Natural killer cell (primary cell): ENCODE measurements at regions of chr6 and their contacts with region 1.

Region 1: DNA sequence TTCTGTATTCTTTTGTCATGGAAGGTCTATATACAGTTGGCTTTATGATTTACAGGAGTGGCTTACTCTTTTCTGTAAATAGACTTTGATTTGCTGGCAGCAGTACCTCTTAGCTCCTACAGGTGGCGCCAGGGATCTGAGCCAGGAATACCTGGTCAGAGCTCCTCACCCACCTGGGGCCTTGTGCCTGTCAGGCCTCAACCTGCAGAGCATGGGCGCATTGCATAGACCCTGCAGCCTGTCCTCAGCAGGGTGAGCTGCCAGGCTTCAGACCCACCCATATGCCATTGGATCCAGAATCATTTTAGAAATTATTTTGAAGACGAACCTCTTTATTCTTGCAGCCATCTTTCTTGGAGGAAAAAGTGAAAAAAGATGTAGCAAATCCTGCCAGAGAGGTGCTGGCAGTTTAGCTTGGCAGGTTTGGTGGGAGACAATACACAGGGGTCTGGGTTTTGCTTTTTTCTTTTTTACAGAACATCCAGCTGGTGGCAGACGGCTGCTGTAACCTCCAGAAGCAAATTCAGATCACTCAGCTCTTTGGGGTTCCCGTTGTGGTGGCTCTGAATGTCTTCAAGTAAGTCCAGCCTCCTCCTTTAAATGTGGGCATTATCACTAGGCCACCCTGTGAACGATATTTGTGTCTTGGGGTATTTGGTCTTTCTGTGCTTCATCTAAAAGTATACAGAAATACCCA is 149.1 kb downstream of the MTHFD1L start:
- DNase-seq: peak; percentile 39 to 81
- ATAC-seq: peak; percentile 79 to 84 (median 79)
- H3K4me3 ChIP-seq: no peak overlapping the region
- H3K4me3 Mint-ChIP-seq: no peak overlapping the region
- H3K27ac ChIP-seq: no peak overlapping the region
- H3K27ac Mint-ChIP-seq: peak overlapping the region in 1 of 2 donors; percentile 24
- H3K4me1 ChIP-seq: no peaks in the 10 kb centered on the region
- H3K4me1 Mint-ChIP-seq: peaks cover 0 to 4% of the 10 kb centered on the region in 2 donors
- H3K27me3 ChIP-seq: no peaks in the 10 kb centered on the region
- H3K27me3 Mint-ChIP-seq: no peaks in the 10 kb centered on the region
- CTCF ChIP-seq: peak; percentile 97

Region 2: GRCh38 chr6:151335930-151336329 is 321.4 kb after region 1 on chr6:
- intact Hi-C with region 1: loop called (anchors 2 kb)
- DNase-seq: no peak
- ATAC-seq: no peak
- H3K4me3 ChIP-seq: no peak overlapping the region
- H3K4me3 Mint-ChIP-seq: no peak overlapping the region
- H3K27ac ChIP-seq: no peak overlapping the region
- H3K27ac Mint-ChIP-seq: no peak overlapping the region
- H3K4me1 ChIP-seq: peaks cover 2% of the 10 kb centered on the region
- H3K4me1 Mint-ChIP-seq: peaks cover 5% of the 10 kb centered on the region in 2 donors
- H3K27me3 ChIP-seq: no peaks in the 10 kb centered on the region
- H3K27me3 Mint-ChIP-seq: peaks cover 0 to 2% of the 10 kb centered on the region in 2 donors
- CTCF ChIP-seq: no peak